ENCODE measurements at regions of chr5 and their contacts with region 1.

Region 1: GRCh38 chr5:36739751-36740221 is 133.4 kb downstream of the SLC1A3 start:
- DNase-seq: no peak
- H3K4me3 ChIP-seq: no peak overlapping the region
- H3K27ac ChIP-seq: no peak overlapping the region
- H3K4me1 ChIP-seq: peaks cover 0 to 29% (median 23%) of the 10 kb centered on the region in 4 donors
- H3K27me3 ChIP-seq: peaks cover 0 to 5% (median 0%) of the 10 kb centered on the region in 4 donors
- CTCF ChIP-seq: peak; percentile 61 to 78 (median 67)
- EP300 ChIP-seq: no peak
- POLR2A ChIP-seq: no peak

Region 2: GRCh38 chr5:36389245-36389644 is 350.5 kb before region 1 on chr5:
- intact Hi-C with region 1: no loop called
- DNase-seq: no peak
- H3K4me3 ChIP-seq: no peak overlapping the region
- H3K27ac ChIP-seq: no peak overlapping the region
- H3K4me1 ChIP-seq: peaks cover 0 to 18% (median 14%) of the 10 kb centered on the region in 4 donors
- H3K27me3 ChIP-seq: no peaks in the 10 kb centered on the region
- CTCF ChIP-seq: no peak
- EP300 ChIP-seq: no peak
- POLR2A ChIP-seq: no peak

Region 3: DNA sequence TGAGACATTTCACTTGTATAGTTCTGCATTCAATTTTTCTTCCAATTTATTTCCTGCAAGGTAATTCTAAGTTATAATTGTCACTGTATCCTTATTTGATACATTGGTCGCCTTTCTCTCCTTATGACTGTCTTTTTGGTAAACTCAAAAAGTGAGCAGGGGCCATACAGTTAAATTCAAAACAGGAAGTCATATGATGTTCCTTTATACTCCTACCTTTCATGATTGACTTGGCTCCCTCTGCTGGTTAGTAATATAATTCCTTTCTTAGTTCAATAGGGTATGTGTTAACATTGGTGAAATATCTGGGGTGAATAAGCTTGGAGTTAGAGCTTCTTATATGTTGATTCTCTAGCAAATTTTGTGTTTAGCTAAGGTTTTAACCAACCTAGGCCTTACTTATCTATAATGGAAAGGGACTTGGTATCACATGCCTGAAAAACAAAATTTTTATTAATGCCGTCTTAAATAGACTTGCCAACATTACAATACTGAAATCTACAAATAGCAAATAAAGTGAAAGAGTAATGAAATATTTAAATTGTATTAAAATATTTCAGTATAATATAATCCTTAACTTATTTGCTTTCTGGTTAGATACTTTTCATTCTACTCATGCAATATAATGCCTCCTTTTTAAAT is 130.7 kb after region 1 on chr5:
- intact Hi-C with region 1: loop called (anchors 2 kb)
- DNase-seq: no peak
- H3K4me3 ChIP-seq: no peak overlapping the region
- H3K27ac ChIP-seq: no peak overlapping the region
- H3K4me1 ChIP-seq: peaks cover 11 to 37% (median 30%) of the 10 kb centered on the region in 4 donors
- H3K27me3 ChIP-seq: no peaks in the 10 kb centered on the region
- CTCF ChIP-seq: peak; percentile 65 to 71 (median 70)
- EP300 ChIP-seq: no peak
- POLR2A ChIP-seq: no peak

Region 4: GRCh38 chr5:36944607-36945225 is 204.9 kb after region 1 on chr5:
- intact Hi-C with region 1: loop called (anchors 10 kb)
- DNase-seq: no peak
- H3K4me3 ChIP-seq: no peak overlapping the region
- H3K27ac ChIP-seq: no peak overlapping the region
- H3K4me1 ChIP-seq: peaks cover 41 to 47% (median 47%) of the 10 kb centered on the region in 4 donors
- H3K27me3 ChIP-seq: no peaks in the 10 kb centered on the region
- CTCF ChIP-seq: peak; percentile 28 to 62 (median 50)
- EP300 ChIP-seq: no peak
- POLR2A ChIP-seq: no peak

Region 5: DNA sequence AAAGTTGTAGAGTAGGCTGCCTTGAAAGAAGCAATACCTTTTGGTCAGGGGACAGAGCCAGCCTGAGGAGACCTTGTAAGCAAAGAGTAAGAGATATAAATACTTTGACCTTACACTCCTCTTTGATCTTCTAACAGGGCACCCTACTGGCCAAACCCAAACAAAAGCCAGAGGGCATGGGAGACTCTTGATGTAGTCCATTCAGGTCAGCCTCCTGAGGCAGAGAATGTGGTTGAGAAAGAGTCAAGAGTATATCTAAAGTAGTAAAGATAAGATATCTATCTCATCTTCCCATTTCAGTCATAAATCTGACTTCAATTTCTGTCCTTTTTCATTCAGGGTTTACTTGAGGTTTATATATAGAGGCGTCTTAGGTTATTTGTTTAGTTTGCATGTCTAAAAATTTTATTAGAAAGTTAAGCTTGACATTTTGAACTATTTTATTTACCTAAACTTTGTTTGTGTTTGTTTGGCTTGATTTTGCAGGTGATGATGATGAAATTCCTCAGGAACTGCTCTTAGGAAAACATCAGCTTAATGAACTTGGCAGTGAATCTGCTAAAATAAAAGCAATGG is 262.5 kb after region 1 on chr5:
- intact Hi-C with region 1: loop called (anchors 5 kb)
- DNase-seq: no peak
- H3K4me3 ChIP-seq: no peak overlapping the region
- H3K27ac ChIP-seq: no peak overlapping the region
- H3K4me1 ChIP-seq: no peaks in the 10 kb centered on the region
- H3K27me3 ChIP-seq: no peaks in the 10 kb centered on the region
- CTCF ChIP-seq: no peak
- EP300 ChIP-seq: no peak
- POLR2A ChIP-seq: no peak